Breast epithelium (tissue), 4 donors: ENCODE measurements at regions of chrX and their contacts with region 1.

Region 1: GRCh38 chrX:113828110-113828869 is 755.6 kb upstream of the HTR2C start:
- DNase-seq: no peak
- H3K4me3 ChIP-seq: no peak overlapping the region
- H3K27ac ChIP-seq: no peak overlapping the region
- H3K4me1 ChIP-seq: no peaks in the 10 kb centered on the region
- H3K27me3 ChIP-seq: peaks cover 0 to 43% of the 10 kb centered on the region in 2 donors
- CTCF ChIP-seq: no peak
- POLR2A ChIP-seq: no peak

Region 2: GRCh38 chrX:113558571-113558970 is 269.7 kb before region 1 on chrX:
- intact Hi-C with region 1: loop called (anchors 5 kb)
- DNase-seq: no peak
- H3K4me3 ChIP-seq: no peak overlapping the region
- H3K27ac ChIP-seq: no peak overlapping the region
- H3K4me1 ChIP-seq: no peaks in the 10 kb centered on the region
- H3K27me3 ChIP-seq: peaks cover 0 to 23% of the 10 kb centered on the region in 2 donors
- CTCF ChIP-seq: no peak
- POLR2A ChIP-seq: no peak